BJ (cell line): ENCODE measurements at regions of chr5 and their contacts with region 1.

Region 1: DNA sequence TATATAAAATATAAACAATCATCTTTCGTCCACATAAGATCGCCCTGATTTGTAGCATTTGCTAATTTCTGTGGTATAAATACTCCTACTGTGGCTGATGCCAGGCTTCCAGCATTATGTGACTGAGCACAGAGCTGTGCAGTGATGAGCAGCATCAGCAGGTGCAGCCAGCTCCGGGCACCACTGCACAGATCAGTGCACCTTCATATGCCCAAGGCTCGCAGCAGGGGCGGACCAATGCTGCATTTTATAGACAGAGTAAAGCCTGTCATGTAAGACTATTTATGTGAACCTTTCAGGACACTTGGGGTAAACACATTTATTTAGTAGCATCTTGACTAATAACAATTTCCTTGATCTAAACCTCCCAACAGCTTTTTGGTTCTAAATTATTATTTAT is 53.1 kb downstream of the LMNB1 start:
- DNase-seq: no peak
- H3K4me3 ChIP-seq: no peak overlapping the region
- H3K27me3 ChIP-seq: no peaks in the 10 kb centered on the region
- CTCF ChIP-seq: no peak

Region 2: DNA sequence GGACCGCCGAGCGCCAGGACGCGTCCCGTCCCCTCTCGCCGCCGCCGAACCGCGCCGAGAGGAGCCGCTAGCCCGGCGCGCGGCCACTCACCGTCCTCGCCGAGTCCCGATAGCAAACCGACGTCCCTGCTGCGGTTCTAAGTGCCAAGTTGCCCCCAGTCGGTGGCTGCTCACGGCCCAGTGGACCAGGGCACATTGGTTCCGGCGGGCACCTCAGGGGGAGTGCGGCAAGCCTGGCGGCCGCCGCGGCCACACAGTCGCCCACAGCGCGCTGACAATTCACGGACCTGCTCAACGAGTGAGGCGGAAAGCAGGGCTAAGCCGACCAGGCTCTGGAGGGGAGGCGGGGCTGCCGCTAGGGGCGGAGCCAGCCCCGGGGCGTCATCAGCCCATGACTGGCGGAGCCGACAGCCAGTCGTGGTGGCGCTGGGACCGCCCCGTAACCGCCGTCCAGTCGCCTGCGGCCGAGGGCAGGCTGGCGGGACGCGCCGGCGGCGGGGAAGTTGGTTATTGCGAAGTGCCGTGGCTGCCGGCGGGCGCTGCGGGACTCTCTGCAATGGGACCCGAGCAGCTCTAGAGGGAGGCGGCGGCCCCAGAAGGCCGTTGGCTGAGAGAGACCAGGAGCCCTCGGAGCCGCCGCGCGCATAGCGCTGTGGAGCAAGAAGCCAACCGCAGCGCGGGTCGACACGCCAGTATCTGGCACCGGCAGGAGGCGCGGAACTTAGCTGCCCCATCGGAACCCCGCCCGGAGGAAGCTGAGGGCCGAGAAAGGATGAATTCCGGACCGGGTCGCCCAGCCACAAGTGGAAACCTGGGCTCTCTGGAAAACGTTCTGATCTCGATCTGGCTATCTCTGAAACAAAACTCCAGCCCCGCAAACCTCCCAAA is 200.4 kb after region 1 on chr5 and contains the start of gene MARCHF3:
- CTCF ChIA-PET with region 1: no interaction called
- POLR2A ChIA-PET with region 1: interaction called, 13 read pairs
- DNase-seq: peak; percentile 72
- H3K4me3 ChIP-seq: peak within 1 kb of the TSS; percentile 91
- H3K27me3 ChIP-seq: no peaks in the 10 kb centered on the region
- CTCF ChIP-seq: peak; percentile 51
- polyA plus RNA-seq, gene MARCHF3: 8.6 TPM in 2 replicates